ENCODE measurements at regions of chr9 and their contacts with region 1.

Region 1: GRCh38 chr9:96654443-96655197 is 497 bp downstream of the PRXL2C start:
- DNase-seq: peak; percentile 80
- H3K4me3 ChIP-seq: peak overlapping the region; percentile 60
- H3K27ac ChIP-seq: peak overlapping the region; percentile 83
- H3K4me1 ChIP-seq: no peaks in the 10 kb centered on the region
- H3K27me3 ChIP-seq: no peaks in the 10 kb centered on the region
- CTCF ChIP-seq: no peak

Region 2: GRCh38 chr9:95907794-95908193 is 746.8 kb before region 1 on chr9:
- intact Hi-C with region 1: no loop called
- DNase-seq: no peak
- H3K4me3 ChIP-seq: no peak overlapping the region
- H3K27ac ChIP-seq: no peak overlapping the region
- H3K4me1 ChIP-seq: no peaks in the 10 kb centered on the region
- H3K27me3 ChIP-seq: no peaks in the 10 kb centered on the region
- CTCF ChIP-seq: no peak

Region 3: DNA sequence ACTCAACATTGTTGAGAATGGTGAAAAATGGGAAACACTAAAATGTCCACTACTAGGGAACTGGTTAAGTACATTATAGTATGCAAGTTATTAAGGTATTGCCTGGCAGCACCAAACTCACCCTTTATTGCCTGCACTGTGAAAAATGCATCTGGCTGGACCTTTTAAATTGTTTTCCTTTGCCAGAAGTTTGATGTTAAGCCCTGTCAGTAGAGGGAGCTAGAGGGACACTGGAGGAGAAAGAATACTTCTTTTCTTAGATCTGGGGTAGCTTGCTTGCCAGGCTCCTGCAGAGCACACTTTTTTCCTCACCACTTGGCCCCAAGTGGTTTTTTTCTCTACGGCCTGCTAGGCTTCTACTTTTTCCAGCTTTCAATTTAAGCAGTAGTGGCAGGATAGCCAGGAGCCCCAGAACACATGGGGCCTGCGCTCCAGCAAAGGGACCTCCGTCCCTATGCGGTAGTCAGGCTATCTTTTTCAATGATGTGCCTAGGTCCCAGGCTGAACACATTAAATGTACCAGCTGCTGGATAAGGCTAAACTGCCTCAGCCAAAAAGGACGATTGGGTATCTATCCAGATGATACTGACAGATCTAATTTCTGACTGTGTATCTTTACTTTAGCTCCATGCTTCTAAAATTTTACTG is 212.7 kb before region 1 on chr9:
- intact Hi-C with region 1: loop called (anchors 5 kb)
- DNase-seq: peak; percentile 49
- H3K4me3 ChIP-seq: no peak overlapping the region
- H3K27ac ChIP-seq: no peak overlapping the region
- H3K4me1 ChIP-seq: no peaks in the 10 kb centered on the region
- H3K27me3 ChIP-seq: no peaks in the 10 kb centered on the region
- CTCF ChIP-seq: peak; percentile 56